ENCODE measurements at regions of chr11 and their contacts with region 1.

Region 1: GRCh38 chr11:112260490-112260889 is at the start of gene PLET1:
- DNase-seq: peak; percentile 83
- ATAC-seq: peak; percentile 83
- H3K4me3 ChIP-seq: no peak within 1 kb of the TSS
- H3K27ac ChIP-seq: peak within 1 kb of the TSS; percentile 48
- H3K4me1 ChIP-seq: peaks cover 18% of the 10 kb centered on the region
- H3K27me3 ChIP-seq: no peaks in the 10 kb centered on the region
- CTCF ChIP-seq: no peak
- total RNA-seq, gene PLET1: 0.26 TPM in 1 of 2 replicates, not detected in the other

Region 2: GRCh38 chr11:112219476-112220232 is 40.8 kb before region 1 on chr11:
- CTCF ChIA-PET with region 1: no interaction called
- POLR2A ChIA-PET with region 1: no interaction called
- intact Hi-C with region 1: loop called (anchors 5 kb)
- DNase-seq: peak; percentile 88
- ATAC-seq: peak; percentile 85
- H3K4me3 ChIP-seq: no peak overlapping the region
- H3K27ac ChIP-seq: no peak overlapping the region
- H3K4me1 ChIP-seq: peaks cover 33% of the 10 kb centered on the region
- H3K27me3 ChIP-seq: no peaks in the 10 kb centered on the region
- CTCF ChIP-seq: peak; percentile 91

Measured in PC-3 (cell line).